ENCODE measurements at regions of chr12 and their contacts with region 1.

Region 1: DNA sequence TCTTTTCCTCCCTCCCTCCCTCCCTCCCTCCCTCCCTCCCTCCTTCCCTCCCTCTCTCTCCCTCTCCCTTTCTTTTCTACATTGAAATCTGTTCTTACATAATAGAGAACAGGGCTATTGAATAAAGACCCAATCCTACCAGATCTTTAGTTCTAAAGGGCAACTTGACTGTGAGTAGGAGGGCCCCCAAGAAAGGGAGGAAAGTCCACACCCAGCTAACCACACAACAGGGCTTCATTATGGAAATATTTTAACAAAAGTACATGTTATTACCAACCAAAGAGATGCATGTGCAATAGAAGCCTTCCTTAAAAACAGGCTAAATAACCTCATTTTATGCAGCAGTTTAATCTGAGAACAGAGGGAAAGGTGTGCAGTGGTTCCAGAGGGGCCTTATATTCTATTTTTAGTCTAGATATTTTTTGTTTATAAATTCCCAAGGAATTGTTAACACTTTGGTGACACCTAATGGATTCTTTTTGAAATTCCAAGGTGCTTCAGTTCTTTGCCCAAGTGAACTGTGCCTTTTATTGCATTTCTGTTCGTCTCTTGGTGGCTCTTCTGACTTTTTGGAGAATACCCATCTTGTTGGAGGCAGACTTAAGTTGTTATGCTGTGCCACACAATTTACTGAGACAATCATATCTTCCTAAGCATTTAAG is 63.0 kb downstream of the GNS start:
- DNase-seq: no peak
- ATAC-seq: peak in 3 of 4 donors; percentile 20 to 41 (median 34)
- H3K4me3 ChIP-seq: no peak overlapping the region
- H3K27ac ChIP-seq: no peak overlapping the region
- H3K4me1 ChIP-seq: no peaks in the 10 kb centered on the region
- H3K27me3 ChIP-seq: no peaks in the 10 kb centered on the region
- CTCF ChIP-seq: peak; percentile 36 to 49 (median 42)
- POLR2A ChIP-seq: no peak

Region 2: GRCh38 chr12:64544371-64545080 is 151.7 kb before region 1 on chr12:
- intact Hi-C with region 1: loop called in 1 of 2 experiments (anchors 5 kb)
- DNase-seq: no peak
- ATAC-seq: no peak
- H3K4me3 ChIP-seq: no peak overlapping the region
- H3K27ac ChIP-seq: no peak overlapping the region
- H3K4me1 ChIP-seq: no peaks in the 10 kb centered on the region
- H3K27me3 ChIP-seq: no peaks in the 10 kb centered on the region
- CTCF ChIP-seq: no peak
- POLR2A ChIP-seq: no peak

Region 3: GRCh38 chr12:64551698-64552097 is 144.5 kb before region 1 on chr12:
- intact Hi-C with region 1: loop called (anchors 5 kb)
- DNase-seq: no peak
- ATAC-seq: no peak
- H3K4me3 ChIP-seq: no peak overlapping the region
- H3K27ac ChIP-seq: no peak overlapping the region
- H3K4me1 ChIP-seq: no peaks in the 10 kb centered on the region
- H3K27me3 ChIP-seq: no peaks in the 10 kb centered on the region
- CTCF ChIP-seq: no peak
- POLR2A ChIP-seq: no peak